Natural killer cell (primary cell): ENCODE measurements at regions of chr10 and their contacts with region 1.

Region 1: GRCh38 chr10:101301249-101301711 is 52.7 kb upstream of the BTRC start:
- DNase-seq: peak in 1 of 2 donors; percentile 46
- ATAC-seq: peak in 1 of 3 donors; percentile 58
- H3K4me3 ChIP-seq: no peak overlapping the region
- H3K4me3 Mint-ChIP-seq: no peak overlapping the region
- H3K27ac ChIP-seq: no peak overlapping the region
- H3K27ac Mint-ChIP-seq: no peak overlapping the region
- H3K4me1 ChIP-seq: no peaks in the 10 kb centered on the region
- H3K4me1 Mint-ChIP-seq: peaks cover 0 to 5% of the 10 kb centered on the region in 2 donors
- H3K27me3 ChIP-seq: peaks cover 3% of the 10 kb centered on the region
- H3K27me3 Mint-ChIP-seq: peaks cover 36 to 59% of the 10 kb centered on the region in 2 donors
- CTCF ChIP-seq: no peak

Region 2: GRCh38 chr10:101425535-101425934 is 124.3 kb after region 1 on chr10:
- intact Hi-C with region 1: no loop called
- DNase-seq: no peak
- ATAC-seq: no peak
- H3K4me3 ChIP-seq: no peak overlapping the region
- H3K4me3 Mint-ChIP-seq: no peak overlapping the region
- H3K27ac ChIP-seq: no peak overlapping the region
- H3K27ac Mint-ChIP-seq: no peak overlapping the region
- H3K4me1 ChIP-seq: no peaks in the 10 kb centered on the region
- H3K4me1 Mint-ChIP-seq: peaks cover 16 to 22% of the 10 kb centered on the region in 2 donors
- H3K27me3 ChIP-seq: no peaks in the 10 kb centered on the region
- H3K27me3 Mint-ChIP-seq: no peaks in the 10 kb centered on the region
- CTCF ChIP-seq: no peak

Region 3: GRCh38 chr10:101467286-101467770 is 166.0 kb after region 1 on chr10:
- intact Hi-C with region 1: loop called (anchors 5 kb)
- DNase-seq: peak in 1 of 2 donors; percentile 73
- ATAC-seq: peak; percentile 83 to 95 (median 86)
- H3K4me3 ChIP-seq: no peak overlapping the region
- H3K4me3 Mint-ChIP-seq: no peak overlapping the region
- H3K27ac ChIP-seq: no peak overlapping the region
- H3K27ac Mint-ChIP-seq: no peak overlapping the region
- H3K4me1 ChIP-seq: no peaks in the 10 kb centered on the region
- H3K4me1 Mint-ChIP-seq: peaks cover 6 to 7% of the 10 kb centered on the region in 2 donors
- H3K27me3 ChIP-seq: no peaks in the 10 kb centered on the region
- H3K27me3 Mint-ChIP-seq: no peaks in the 10 kb centered on the region
- CTCF ChIP-seq: peak; percentile 74